Caco-2 (cell line): ENCODE measurements at regions of chr6 and their contacts with region 1.

Region 1: DNA sequence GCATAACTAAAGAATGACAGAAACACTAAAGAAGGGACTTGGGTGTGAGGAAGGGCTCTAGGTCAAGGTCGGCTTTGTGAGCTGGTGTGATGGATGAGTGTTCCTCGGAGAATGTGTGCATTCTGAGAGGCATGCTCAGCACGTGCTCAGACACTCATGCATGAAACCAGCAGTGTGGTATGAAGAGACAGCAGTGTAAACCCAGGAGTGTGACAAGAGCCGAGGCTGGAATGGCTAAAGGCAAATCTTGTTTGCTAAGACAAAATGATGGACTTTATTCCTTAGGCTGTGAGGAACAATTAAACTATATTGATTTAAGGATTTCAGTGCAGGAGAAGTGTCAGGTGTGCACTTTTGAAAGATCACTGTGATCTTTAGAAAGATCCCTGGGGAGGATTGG is 107.4 kb upstream of the MAP7 start:
- DNase-seq: peak; percentile 44 to 55
- H3K4me3 ChIP-seq: no peak overlapping the region
- H3K4me3 Mint-ChIP-seq: no peak overlapping the region
- H3K27ac Mint-ChIP-seq: peak overlapping the region; percentile 1
- H3K4me1 ChIP-seq: peaks cover 16% of the 10 kb centered on the region
- H3K4me1 Mint-ChIP-seq: peaks cover 6% of the 10 kb centered on the region
- H3K27me3 ChIP-seq: no peaks in the 10 kb centered on the region
- H3K27me3 Mint-ChIP-seq: no peaks in the 10 kb centered on the region
- CTCF ChIP-seq: no peak

Region 2: DNA sequence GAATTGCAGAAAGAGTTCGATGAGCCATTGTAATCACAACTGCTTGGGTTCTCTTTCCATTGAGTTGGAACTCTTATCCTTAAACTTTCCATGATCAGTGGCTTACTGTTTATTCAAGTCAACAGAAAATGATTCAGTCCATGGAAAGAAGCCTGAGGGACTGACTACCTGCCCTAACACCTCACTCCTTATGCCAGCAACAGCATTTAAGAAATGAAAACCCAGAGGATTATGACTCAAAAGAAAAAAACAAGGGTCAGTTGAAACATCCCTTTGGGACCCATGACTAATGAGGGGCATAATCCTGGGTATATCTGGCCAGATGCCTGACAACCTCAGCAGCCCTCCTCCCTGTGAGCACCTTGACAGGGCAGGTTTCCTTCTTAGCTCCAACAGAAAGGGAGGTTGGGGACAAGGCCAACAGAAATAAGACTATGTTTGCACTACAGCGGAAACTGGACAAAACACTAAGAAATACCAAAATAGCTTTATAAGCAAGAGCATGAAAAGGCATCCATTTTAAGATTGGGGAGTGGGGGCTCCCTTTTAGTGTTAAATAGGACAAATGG is 28.0 kb after region 1 on chr6:
- CTCF ChIA-PET with region 1: no interaction called
- POLR2A ChIA-PET with region 1: no interaction called
- intact Hi-C with region 1: no loop called
- DNase-seq: no peak
- H3K4me3 ChIP-seq: no peak overlapping the region
- H3K4me3 Mint-ChIP-seq: no peak overlapping the region
- H3K27ac Mint-ChIP-seq: no peak overlapping the region
- H3K4me1 ChIP-seq: no peaks in the 10 kb centered on the region
- H3K4me1 Mint-ChIP-seq: no peaks in the 10 kb centered on the region
- H3K27me3 ChIP-seq: no peaks in the 10 kb centered on the region
- H3K27me3 Mint-ChIP-seq: no peaks in the 10 kb centered on the region
- CTCF ChIP-seq: no peak

Region 3: GRCh38 chr6:136696238-136696637 is 38.6 kb after region 1 on chr6:
- CTCF ChIA-PET with region 1: no interaction called
- POLR2A ChIA-PET with region 1: no interaction called
- intact Hi-C with region 1: loop called (anchors 2 kb)
- DNase-seq: no peak
- H3K4me3 ChIP-seq: no peak overlapping the region
- H3K4me3 Mint-ChIP-seq: no peak overlapping the region
- H3K27ac Mint-ChIP-seq: no peak overlapping the region
- H3K4me1 ChIP-seq: peaks cover 12% of the 10 kb centered on the region
- H3K4me1 Mint-ChIP-seq: peaks cover 12% of the 10 kb centered on the region
- H3K27me3 ChIP-seq: no peaks in the 10 kb centered on the region; the same call in 1 of the 2 replicates
- H3K27me3 Mint-ChIP-seq: no peaks in the 10 kb centered on the region
- CTCF ChIP-seq: no peak